ENCODE measurements at regions of chr12 and their contacts with region 1.

Region 1: DNA sequence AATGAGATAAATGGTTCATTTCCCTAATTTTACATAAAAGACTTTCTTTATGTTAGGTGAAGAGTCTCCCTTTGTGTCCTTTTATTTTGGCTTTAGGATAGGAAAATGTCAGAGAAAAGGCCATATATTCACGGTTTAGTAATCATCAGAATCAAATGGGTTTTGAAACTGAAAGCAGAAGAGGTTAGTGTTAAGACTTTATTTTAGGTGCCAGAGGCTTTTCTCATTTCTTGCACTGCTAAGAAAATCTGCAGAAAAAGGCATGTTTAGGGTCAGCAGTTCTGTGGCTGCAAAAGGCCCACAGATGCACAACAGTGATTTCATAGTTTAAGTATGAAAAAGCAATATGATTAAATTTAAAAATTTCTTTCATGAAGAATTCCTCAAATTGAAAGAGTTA is 80.4 kb upstream of the SINHCAF start:
- DNase-seq: no peak
- H3K4me3 ChIP-seq: no peak overlapping the region
- H3K4me3 Mint-ChIP-seq: no peak overlapping the region
- H3K27ac ChIP-seq: no peak overlapping the region
- H3K27ac Mint-ChIP-seq: no peak overlapping the region
- H3K4me1 ChIP-seq: peaks cover 0 to 3% of the 10 kb centered on the region in 2 donors
- H3K4me1 Mint-ChIP-seq: peaks cover 8% of the 10 kb centered on the region
- H3K27me3 ChIP-seq: no peaks in the 10 kb centered on the region
- H3K27me3 Mint-ChIP-seq: peaks cover 0 to 2% (median 0%) of the 10 kb centered on the region in 3 donors
- CTCF ChIP-seq: no peak

Region 2: DNA sequence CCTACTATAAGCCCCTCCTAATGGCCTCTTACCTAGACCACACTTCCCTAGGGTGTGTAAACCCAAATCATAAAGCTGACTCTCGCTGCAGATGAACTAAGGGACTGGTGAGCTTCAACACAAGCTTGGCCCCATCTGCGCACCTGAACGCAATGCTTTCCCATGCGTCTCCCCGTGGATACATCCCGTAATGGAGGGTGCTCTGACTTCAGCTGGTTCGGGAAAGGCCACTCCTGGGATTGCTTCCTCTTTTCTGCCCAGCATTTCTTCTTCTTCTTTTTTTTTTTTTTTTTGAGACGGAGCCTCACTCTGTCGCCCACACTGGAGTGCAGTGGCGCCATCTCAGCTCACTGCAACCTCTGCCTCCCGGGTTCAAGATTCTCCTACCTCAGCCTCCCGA is 225.4 kb after region 1 on chr12:
- intact Hi-C with region 1: loop called (anchors 1 to 5 kb)
- DNase-seq: peak in 2 of 3 donors; percentile 34 to 65
- H3K4me3 ChIP-seq: no peak overlapping the region
- H3K4me3 Mint-ChIP-seq: peak overlapping the region in 1 of 2 donors; percentile 60
- H3K27ac ChIP-seq: no peak overlapping the region
- H3K27ac Mint-ChIP-seq: no peak overlapping the region
- H3K4me1 ChIP-seq: peaks cover 12% of the 10 kb centered on the region in 2 donors
- H3K4me1 Mint-ChIP-seq: peaks cover 19% of the 10 kb centered on the region
- H3K27me3 ChIP-seq: no peaks in the 10 kb centered on the region
- H3K27me3 Mint-ChIP-seq: peaks cover 0 to 6% (median 3%) of the 10 kb centered on the region in 3 donors
- CTCF ChIP-seq: no peak

Region 3: GRCh38 chr12:32312049-32312670 is 905.8 kb after region 1 on chr12:
- intact Hi-C with region 1: loop called in 1 of 2 experiments (anchors 5 kb)
- DNase-seq: peak; percentile 23 to 30 (median 29)
- H3K4me3 ChIP-seq: no peak overlapping the region
- H3K4me3 Mint-ChIP-seq: no peak overlapping the region
- H3K27ac ChIP-seq: no peak overlapping the region
- H3K27ac Mint-ChIP-seq: no peak overlapping the region
- H3K4me1 ChIP-seq: no peaks in the 10 kb centered on the region
- H3K4me1 Mint-ChIP-seq: peaks cover 2% of the 10 kb centered on the region
- H3K27me3 ChIP-seq: no peaks in the 10 kb centered on the region
- H3K27me3 Mint-ChIP-seq: no peaks in the 10 kb centered on the region
- CTCF ChIP-seq: peak; percentile 61